ENCODE measurements at regions of chr9 and their contacts with region 1.

Region 1: DNA sequence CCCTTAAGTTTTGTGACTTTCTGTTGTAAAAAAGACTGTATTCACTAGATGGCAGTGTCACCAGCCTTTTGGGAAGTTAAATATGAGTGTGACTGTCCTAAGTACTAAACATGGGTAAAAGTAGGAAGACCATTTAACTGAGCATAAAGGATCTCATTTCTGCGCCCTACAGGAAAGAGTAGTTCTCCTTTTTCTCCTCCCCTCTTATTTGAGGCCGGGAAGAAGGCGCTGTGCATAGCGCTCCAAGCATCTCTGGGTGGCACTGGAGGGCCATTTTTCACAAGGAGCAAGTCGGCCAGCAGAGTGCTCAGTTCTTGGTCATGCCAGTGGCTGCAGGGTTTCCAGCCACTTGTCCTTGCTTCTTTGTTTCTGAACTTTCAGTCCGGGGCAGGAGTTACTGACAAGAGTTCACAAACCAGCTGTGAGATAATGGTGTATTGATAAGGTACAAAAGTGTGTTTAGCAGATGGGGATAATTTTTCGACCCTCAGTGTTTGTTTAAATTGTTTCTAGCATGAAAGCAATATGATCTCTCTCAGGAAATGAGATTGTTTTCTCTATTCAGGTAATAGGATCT is 227.6 kb upstream of the DMRT1 start:
- DNase-seq: peak; percentile 76 to 82 (median 79)
- ATAC-seq: peak; percentile 88 to 95 (median 92)
- H3K4me3 ChIP-seq: no peak overlapping the region
- H3K27ac ChIP-seq: peak overlapping the region; percentile 3 to 79 (median 44)
- H3K4me1 ChIP-seq: peaks cover 0 to 68% (median 30%) of the 10 kb centered on the region in 12 donors
- H3K27me3 ChIP-seq: no peaks in the 10 kb centered on the region
- CTCF ChIP-seq: peak; percentile 48 to 97 (median 86)
- POLR2A ChIP-seq: no peak

Region 2: DNA sequence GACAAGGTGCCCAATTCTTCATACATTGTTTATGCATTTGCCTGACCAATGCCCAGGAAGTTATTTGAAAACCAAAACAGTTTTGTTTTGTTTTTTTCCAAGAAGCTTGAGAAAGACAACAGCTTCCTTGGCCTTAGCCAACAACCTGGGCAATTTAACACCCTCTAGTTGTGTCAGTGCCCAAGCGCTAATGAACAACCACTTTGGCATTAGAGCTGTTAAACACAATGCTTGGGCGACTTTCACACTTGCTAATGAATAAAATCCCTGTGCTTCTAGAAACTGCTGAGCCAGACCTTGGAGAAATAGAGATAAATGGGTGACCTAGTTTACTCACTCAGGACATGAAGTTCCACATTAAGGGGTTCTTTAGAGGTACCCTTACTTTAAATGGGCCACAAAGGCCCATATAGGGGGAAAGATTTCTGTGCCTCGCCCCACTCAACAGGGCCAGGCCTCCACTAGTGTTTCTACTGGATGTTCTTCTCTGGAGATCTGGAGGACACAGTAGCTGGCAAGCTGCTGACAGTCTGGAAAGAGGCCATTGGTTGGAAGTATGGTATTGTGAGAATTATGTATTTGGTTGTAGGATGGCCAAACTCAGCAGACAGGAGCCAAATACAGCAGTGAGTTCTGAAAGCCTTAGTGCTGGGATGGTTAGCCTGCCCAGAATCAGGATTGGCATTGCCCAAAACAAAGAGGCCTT is 219.4 kb before region 1 on chr9:
- intact Hi-C with region 1: loop called in 5 of 10 experiments (anchors 5 kb)
- DNase-seq: no peak
- ATAC-seq: no peak
- H3K4me3 ChIP-seq: no peak overlapping the region
- H3K27ac ChIP-seq: no peak overlapping the region
- H3K4me1 ChIP-seq: no peaks in the 10 kb centered on the region
- H3K27me3 ChIP-seq: no peaks in the 10 kb centered on the region
- CTCF ChIP-seq: no peak
- POLR2A ChIP-seq: no peak

Region 3: DNA sequence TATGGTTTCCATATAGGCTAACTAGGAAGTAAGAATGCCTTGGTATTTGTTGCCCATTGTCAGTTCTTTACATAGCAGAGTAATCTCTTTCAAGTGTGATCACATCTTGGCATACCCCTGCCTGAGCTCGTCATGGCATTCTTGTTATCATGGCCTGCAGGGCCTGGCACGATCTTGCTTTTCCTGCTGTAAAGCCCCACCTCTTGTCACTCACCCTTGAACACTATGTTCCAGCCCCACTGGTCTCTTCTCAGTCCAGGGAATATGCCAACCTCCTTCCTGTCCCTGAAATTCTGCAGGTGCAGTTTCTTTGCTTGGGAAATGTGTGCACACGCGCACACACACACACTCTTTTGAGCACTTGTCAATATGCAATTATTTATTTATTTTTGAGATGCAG is 22.6 kb before region 1 on chr9:
- intact Hi-C with region 1: no loop called
- DNase-seq: peak; percentile 71 to 88 (median 74)
- ATAC-seq: peak; percentile 92 to 96 (median 94)
- H3K4me3 ChIP-seq: no peak overlapping the region
- H3K27ac ChIP-seq: peak overlapping the region in 11 of 12 donors; percentile 28 to 87 (median 75)
- H3K4me1 ChIP-seq: peaks cover 0 to 65% (median 26%) of the 10 kb centered on the region in 12 donors
- H3K27me3 ChIP-seq: no peaks in the 10 kb centered on the region
- CTCF ChIP-seq: no peak
- POLR2A ChIP-seq: peak in 1 of 2 donors; percentile 42

Region 4: GRCh38 chr9:693201-694091 is 79.6 kb after region 1 on chr9:
- intact Hi-C with region 1: loop called in 2 of 10 experiments (anchors 10 kb)
- DNase-seq: peak in 4 of 5 donors; percentile 67 to 82 (median 78)
- ATAC-seq: peak; percentile 62 to 77 (median 67)
- H3K4me3 ChIP-seq: peak overlapping the region in 11 of 12 donors; percentile 18 to 59 (median 48)
- H3K27ac ChIP-seq: peak overlapping the region; percentile 87 to 97 (median 92)
- H3K4me1 ChIP-seq: peaks cover 3 to 84% (median 59%) of the 10 kb centered on the region in 12 donors
- H3K27me3 ChIP-seq: no peaks in the 10 kb centered on the region
- CTCF ChIP-seq: peak in 1 of 12 donors; percentile 15
- POLR2A ChIP-seq: peak; percentile 8 to 73

Region 5: DNA sequence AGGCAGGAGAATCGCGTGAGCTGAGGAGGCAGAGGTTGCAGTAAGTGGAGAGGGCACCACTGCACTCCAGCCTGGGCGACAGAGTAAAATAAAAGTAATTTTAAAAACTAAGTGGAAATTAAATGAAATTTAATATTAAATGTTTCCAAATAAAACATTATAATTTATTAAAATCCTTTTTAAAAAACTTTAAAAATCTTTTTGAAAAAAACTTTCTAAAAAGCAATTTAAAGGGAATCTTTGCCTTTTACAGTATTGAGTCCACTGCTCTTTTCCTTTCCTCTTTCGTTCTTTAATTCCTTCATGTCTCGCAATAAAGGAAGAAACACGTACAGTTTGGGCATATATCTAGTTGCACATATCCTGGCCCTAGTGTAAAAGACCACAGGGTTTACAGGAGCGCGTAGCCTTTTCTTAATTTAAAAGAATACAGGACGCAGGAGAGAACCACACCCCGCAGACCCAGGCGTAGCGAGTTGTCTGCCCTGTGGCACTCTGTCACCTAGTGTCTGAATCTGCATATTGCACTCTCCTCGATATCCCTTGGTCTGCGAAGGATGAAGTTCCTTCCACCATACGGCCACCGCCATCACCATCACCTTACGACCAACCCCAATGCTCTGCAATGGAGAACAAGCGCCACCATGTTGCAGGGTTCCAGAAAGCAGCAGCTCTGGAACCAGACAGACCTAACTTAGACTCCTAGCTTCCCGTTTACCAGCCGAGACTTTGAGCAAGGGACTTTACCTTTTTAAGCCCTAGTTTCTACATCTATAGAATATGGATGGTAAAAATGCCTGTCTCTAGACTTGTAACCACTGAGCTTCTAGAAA is 150.0 kb after region 1 on chr9:
- intact Hi-C with region 1: loop called in 9 of 10 experiments (anchors 1 to 5 kb)
- DNase-seq: peak; percentile 65 to 74 (median 72)
- ATAC-seq: peak; percentile 90 to 99 (median 96)
- H3K4me3 ChIP-seq: peak overlapping the region in 6 of 12 donors; percentile 3 to 39 (median 26)
- H3K27ac ChIP-seq: no peak overlapping the region
- H3K4me1 ChIP-seq: peaks cover 0 to 11% (median 0%) of the 10 kb centered on the region in 12 donors
- H3K27me3 ChIP-seq: peaks cover 0 to 3% (median 0%) of the 10 kb centered on the region in 9 donors
- CTCF ChIP-seq: peak; percentile 76 to 97 (median 92)
- POLR2A ChIP-seq: no peak

Region 6: GRCh38 chr9:1009101-1009707 is 395.3 kb after region 1 on chr9:
- intact Hi-C with region 1: loop called in 7 of 10 experiments (anchors 5 to 10 kb)
- DNase-seq: peak; percentile 61 to 89 (median 69)
- ATAC-seq: peak; percentile 89 to 95 (median 94)
- H3K4me3 ChIP-seq: no peak overlapping the region
- H3K27ac ChIP-seq: no peak overlapping the region
- H3K4me1 ChIP-seq: peaks cover 0 to 8% (median 0%) of the 10 kb centered on the region in 12 donors
- H3K27me3 ChIP-seq: peaks cover 0 to 46% (median 3%) of the 10 kb centered on the region in 9 donors
- CTCF ChIP-seq: peak; percentile 84 to 98 (median 95)
- POLR2A ChIP-seq: no peak